Activated naive CD4-positive, alpha-beta T cell treated with anti-CD3 and anti-CD28 coated beads, Interleukin-2, amount 10 ng/mL, durations not matched to agents 7 days and 5 days (primary cell): ENCODE measurements at regions of chr11 and their contacts with region 1.

Region 1: GRCh38 chr11:122754553-122755322 is 83.6 kb upstream of the CRTAM start:
- DNase-seq: peak; percentile 50
- H3K4me3 Mint-ChIP-seq: no peak overlapping the region
- H3K27ac Mint-ChIP-seq: no peak overlapping the region
- H3K4me1 Mint-ChIP-seq: peaks cover 39% of the 10 kb centered on the region
- H3K27me3 Mint-ChIP-seq: peaks cover 7% of the 10 kb centered on the region

Region 2: GRCh38 chr11:122578168-122578825 is 176.4 kb before region 1 on chr11:
- CTCF ChIA-PET with region 1: interaction called, 33 read pairs
- DNase-seq: no peak
- H3K4me3 Mint-ChIP-seq: no peak overlapping the region
- H3K27ac Mint-ChIP-seq: no peak overlapping the region
- H3K4me1 Mint-ChIP-seq: peaks cover 9% of the 10 kb centered on the region
- H3K27me3 Mint-ChIP-seq: no peaks in the 10 kb centered on the region

Region 3: DNA sequence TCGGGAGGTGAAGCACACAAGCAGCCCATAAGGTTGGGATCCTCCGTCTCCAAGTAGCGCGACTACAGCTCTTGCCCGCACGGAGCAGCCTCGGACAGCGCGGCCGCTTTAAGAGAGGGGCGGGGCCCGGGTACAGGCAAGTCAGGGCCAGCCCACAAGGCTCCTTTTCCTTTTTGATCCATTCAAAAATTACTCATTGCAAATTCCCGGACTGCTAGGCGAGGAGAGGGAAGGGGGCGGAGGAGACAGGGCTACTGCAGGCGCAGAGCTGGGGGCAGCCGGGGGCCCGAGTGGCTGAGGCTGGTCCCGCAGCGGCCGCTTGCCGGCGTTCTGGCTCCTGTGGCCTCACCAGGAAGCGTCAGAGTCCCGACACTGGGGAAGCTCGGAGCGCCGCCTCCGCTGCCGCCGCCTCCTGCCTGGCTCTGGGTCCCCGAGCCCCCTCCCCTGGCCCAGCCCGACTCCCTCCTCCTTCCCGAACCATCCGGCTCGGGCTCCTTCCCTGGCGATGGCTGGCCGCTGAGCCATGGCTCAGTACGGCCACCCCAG is 99.1 kb before region 1 on chr11 and contains the start of gene UBASH3B:
- CTCF ChIA-PET with region 1: interaction called, 62 read pairs
- DNase-seq: peak; percentile 74
- H3K4me3 Mint-ChIP-seq: peak within 1 kb of the TSS; percentile 92
- H3K27ac Mint-ChIP-seq: peak within 1 kb of the TSS; percentile 85
- H3K4me1 Mint-ChIP-seq: peaks cover 23% of the 10 kb centered on the region
- H3K27me3 Mint-ChIP-seq: peaks cover 63% of the 10 kb centered on the region

Region 4: GRCh38 chr11:122673701-122674100 is 81.0 kb before region 1 on chr11:
- CTCF ChIA-PET with region 1: interaction called, 22 read pairs
- DNase-seq: no peak
- H3K4me3 Mint-ChIP-seq: no peak overlapping the region
- H3K27ac Mint-ChIP-seq: no peak overlapping the region
- H3K4me1 Mint-ChIP-seq: peaks cover 47% of the 10 kb centered on the region
- H3K27me3 Mint-ChIP-seq: no peaks in the 10 kb centered on the region

Region 5: GRCh38 chr11:122717264-122717867 is 37.4 kb before region 1 on chr11:
- CTCF ChIA-PET with region 1: interaction called, 19 read pairs
- DNase-seq: peak; percentile 55
- H3K4me3 Mint-ChIP-seq: no peak overlapping the region
- H3K27ac Mint-ChIP-seq: peak overlapping the region; percentile 77
- H3K4me1 Mint-ChIP-seq: peaks cover 53% of the 10 kb centered on the region
- H3K27me3 Mint-ChIP-seq: peaks cover 18% of the 10 kb centered on the region

Region 6: DNA sequence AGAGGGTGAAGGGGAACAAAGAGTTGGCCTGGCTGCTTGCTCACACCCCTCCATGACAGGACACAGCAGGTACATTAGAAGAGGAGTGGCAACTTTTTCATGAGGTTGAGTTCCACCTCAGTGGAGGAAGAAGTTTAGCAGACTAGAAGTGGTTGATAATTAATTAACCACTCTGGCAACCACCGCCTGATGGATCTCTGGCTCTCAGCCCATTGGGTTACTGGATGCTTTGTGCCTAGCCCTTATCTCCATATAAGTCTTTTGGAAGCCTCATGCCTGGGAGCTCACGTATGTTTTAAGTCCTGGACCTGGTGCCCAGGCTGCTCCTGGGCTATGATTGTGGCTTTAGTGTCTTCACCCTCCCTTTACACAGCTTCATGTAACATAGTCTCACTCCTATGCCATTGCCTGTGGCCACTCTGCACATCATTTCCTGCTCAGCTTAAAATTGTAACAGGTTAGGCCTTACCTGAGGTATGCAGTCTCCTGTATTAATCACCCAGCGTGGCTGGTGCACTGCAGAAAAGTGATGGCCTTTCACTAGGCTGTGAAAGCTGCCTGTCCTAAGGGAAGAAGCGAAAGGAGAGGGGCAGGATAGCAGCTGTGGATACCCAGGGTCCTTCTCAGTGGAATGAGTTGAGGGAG is 10.9 kb after region 1 on chr11:
- CTCF ChIA-PET with region 1: interaction called, 11 read pairs
- DNase-seq: no peak
- H3K4me3 Mint-ChIP-seq: no peak overlapping the region
- H3K27ac Mint-ChIP-seq: no peak overlapping the region
- H3K4me1 Mint-ChIP-seq: no peaks in the 10 kb centered on the region
- H3K27me3 Mint-ChIP-seq: no peaks in the 10 kb centered on the region

Region 7: GRCh38 chr11:122853971-122854446 is 99.3 kb after region 1 on chr11:
- CTCF ChIA-PET with region 1: interaction called, 10 read pairs
- DNase-seq: peak; percentile 59
- H3K4me3 Mint-ChIP-seq: no peak overlapping the region
- H3K27ac Mint-ChIP-seq: no peak overlapping the region
- H3K4me1 Mint-ChIP-seq: peaks cover 31% of the 10 kb centered on the region
- H3K27me3 Mint-ChIP-seq: peaks cover 11% of the 10 kb centered on the region